Activated CD4-positive, alpha-beta memory T cell treated with anti-CD3 and anti-CD28 coated beads, Interleukin-2, amount 10 ng/mL, durations not matched to agents 7 days and 5 days (primary cell): ENCODE measurements at regions of chr19 and their contacts with region 1.

Region 1: GRCh38 chr19:6639439-6639838 is 30.5 kb downstream of the TNFSF14 start:
- DNase-seq: peak; percentile 68
- H3K4me3 Mint-ChIP-seq: no peak overlapping the region
- H3K27ac Mint-ChIP-seq: peak overlapping the region; percentile 47
- H3K4me1 Mint-ChIP-seq: peaks cover 46% of the 10 kb centered on the region
- H3K27me3 Mint-ChIP-seq: peaks cover 1% of the 10 kb centered on the region

Region 2: DNA sequence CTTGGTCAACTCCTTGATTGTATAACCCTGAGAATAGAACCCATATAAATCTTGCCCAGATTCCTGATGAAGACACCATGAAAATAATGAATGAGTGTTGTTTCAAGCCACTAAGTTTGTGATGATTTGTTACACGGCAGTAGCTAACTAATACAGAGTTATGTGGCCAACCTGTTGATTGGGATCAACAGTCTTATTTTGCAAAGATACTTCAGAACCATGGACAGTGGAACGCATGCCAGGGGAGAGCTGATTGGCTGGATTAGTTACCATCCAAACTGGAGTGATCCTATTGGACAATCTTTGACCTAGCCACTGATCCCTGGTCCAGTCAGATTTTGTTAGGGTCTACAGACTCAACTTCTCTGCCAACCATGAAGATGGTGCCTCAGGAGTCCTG is 75.0 kb before region 1 on chr19:
- CTCF ChIA-PET with region 1: no interaction called
- POLR2A ChIA-PET with region 1: no interaction called
- DNase-seq: no peak
- H3K4me3 Mint-ChIP-seq: no peak overlapping the region
- H3K27ac Mint-ChIP-seq: no peak overlapping the region
- H3K4me1 Mint-ChIP-seq: no peaks in the 10 kb centered on the region
- H3K27me3 Mint-ChIP-seq: peaks cover 32% of the 10 kb centered on the region

Region 3: DNA sequence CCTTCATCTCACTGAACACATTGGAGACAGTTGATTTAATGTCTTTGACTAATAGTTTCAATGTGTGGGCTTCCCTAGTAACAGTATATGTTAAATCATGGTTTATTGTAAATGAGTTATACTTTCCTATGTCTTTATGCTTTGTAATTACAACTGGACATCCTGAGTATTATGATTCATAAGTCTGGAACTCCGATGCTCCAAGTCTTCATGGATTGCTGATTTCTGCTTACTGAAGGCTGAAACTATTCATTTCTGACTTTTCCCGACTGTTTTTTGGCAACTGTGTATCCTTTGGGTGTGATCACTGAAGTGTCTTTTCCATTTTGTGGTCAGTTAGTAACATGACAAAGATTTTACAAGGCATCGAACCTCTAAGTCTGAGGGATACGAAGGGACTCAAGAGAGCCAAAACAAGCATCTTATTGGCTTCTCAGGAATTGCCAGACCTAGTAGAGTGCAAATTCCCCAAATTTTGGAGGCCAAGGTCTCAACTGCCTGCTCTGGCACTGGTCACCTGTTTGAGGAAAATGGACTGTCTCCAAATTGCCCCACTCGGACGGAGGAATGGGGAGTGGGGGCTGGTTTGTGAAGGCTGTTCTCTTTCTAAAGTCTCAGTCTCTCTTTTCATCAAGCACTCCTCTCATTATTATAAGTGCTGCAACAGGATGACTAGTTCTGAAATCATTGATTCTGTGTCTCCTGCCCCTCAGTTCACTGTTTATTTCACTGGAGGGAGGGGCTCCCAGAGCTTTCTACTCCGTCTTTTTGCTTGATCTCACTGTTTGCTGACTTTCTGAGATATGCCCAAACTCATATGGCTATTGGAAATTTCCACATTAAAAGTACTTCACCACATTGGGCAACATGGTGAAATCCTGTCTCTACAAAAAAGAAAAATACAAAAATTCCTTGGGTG is 28.2 kb before region 1 on chr19:
- CTCF ChIA-PET with region 1: no interaction called
- POLR2A ChIA-PET with region 1: no interaction called
- DNase-seq: no peak
- H3K4me3 Mint-ChIP-seq: no peak overlapping the region
- H3K27ac Mint-ChIP-seq: no peak overlapping the region
- H3K4me1 Mint-ChIP-seq: peaks cover 32% of the 10 kb centered on the region
- H3K27me3 Mint-ChIP-seq: peaks cover 16% of the 10 kb centered on the region

Region 4: DNA sequence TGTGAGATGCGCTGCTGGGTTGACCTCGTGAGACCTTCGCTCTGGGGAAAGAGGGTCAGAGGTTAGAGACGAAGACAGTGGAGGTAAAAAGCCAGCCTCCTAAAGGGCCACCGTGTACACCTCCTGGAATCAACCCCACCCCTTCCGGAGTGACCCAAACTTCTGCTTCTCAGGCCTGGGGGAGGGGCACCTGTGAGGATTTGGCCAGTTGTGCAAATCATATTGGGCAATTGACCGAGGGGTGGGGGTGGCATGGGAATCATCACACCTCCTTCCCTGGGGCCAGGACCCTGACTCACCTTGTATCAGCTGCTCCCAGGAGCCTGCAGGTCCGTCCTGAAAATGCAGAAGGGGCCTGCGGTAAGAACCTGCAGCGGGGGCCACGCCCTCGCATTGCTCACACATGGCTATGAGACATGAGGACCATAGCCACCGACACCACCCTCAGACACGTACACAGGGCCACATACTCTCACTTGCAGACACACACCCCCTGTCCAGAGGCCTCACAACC is 27.7 kb after region 1 on chr19:
- CTCF ChIA-PET with region 1: interaction called, 5 read pairs
- POLR2A ChIA-PET with region 1: interaction called, 26 read pairs
- DNase-seq: peak; percentile 45
- H3K4me3 Mint-ChIP-seq: peak overlapping the region; percentile 56
- H3K27ac Mint-ChIP-seq: peak overlapping the region; percentile 48
- H3K4me1 Mint-ChIP-seq: peaks cover 46% of the 10 kb centered on the region
- H3K27me3 Mint-ChIP-seq: peaks cover 5% of the 10 kb centered on the region

Region 5: DNA sequence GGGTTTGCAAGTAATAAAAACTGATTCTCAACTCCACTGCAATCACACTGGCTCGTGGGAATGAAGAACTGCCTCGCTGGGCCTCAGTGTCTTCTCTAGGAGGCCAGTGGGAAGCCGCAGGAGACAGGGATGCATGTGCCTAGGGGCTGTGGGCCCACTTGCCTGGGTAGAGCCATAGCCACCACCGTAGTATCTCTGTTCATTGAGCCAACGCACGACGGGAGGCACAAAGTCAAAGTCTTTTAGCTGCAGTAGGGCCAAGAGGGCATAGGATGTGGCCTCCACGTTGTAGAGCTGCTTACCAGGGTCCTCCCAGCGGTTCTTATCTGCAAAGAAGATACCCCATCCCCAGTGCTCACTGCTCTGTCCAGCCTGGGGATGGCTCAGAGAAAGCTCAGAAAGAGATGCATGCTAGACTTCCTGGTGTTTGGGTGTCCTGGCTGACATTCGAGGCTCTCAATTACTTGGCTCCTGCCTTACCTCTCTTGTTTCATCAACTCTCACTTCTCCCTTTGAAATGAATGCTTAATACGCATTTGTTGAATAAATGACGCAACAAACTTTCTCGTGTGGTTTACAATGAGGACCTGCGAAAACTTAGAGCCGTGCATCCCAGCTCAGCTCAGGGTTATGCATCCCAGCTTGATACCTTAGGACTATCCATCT is 46.7 kb after region 1 on chr19:
- CTCF ChIA-PET with region 1: no interaction called
- POLR2A ChIA-PET with region 1: no interaction called
- DNase-seq: no peak
- H3K4me3 Mint-ChIP-seq: no peak overlapping the region
- H3K27ac Mint-ChIP-seq: no peak overlapping the region
- H3K4me1 Mint-ChIP-seq: peaks cover 4% of the 10 kb centered on the region
- H3K27me3 Mint-ChIP-seq: peaks cover 22% of the 10 kb centered on the region